ENCODE measurements at regions of chr4 and their contacts with region 1.

Region 1: GRCh38 chr4:184815046-184815877 is 10.5 kb downstream of the ACSL1 start:
- DNase-seq: peak; percentile 76
- H3K4me3 ChIP-seq: peak overlapping the region; percentile 49
- H3K27ac ChIP-seq: peak overlapping the region; percentile 84
- H3K4me1 ChIP-seq: peaks cover 68% of the 10 kb centered on the region
- CTCF ChIP-seq: no peak

Region 2: GRCh38 chr4:184649026-184649970 is 166.0 kb before region 1 on chr4 and contains the starts of genes CASP3 and PRIMPOL:
- CTCF ChIA-PET with region 1: no interaction called
- POLR2A ChIA-PET with region 1: interaction called, 3 read pairs
- intact Hi-C with region 1: loop called (anchors 2 kb)
- DNase-seq: peak; percentile 96
- H3K4me3 ChIP-seq: peak within 1 kb of the TSS; percentile 93
- H3K27ac ChIP-seq: peak within 1 kb of the TSS; percentile 79
- H3K4me1 ChIP-seq: peaks cover 42% of the 10 kb centered on the region
- CTCF ChIP-seq: 0 out of 2 replicates have a peak, but pooled peaks have one; percentile 21
- total RNA-seq, gene CASP3: 25.8 and 29.5 TPM in 2 replicates
- total RNA-seq, gene PRIMPOL: 8.8 and 9.2 TPM in 2 replicates

Region 3: DNA sequence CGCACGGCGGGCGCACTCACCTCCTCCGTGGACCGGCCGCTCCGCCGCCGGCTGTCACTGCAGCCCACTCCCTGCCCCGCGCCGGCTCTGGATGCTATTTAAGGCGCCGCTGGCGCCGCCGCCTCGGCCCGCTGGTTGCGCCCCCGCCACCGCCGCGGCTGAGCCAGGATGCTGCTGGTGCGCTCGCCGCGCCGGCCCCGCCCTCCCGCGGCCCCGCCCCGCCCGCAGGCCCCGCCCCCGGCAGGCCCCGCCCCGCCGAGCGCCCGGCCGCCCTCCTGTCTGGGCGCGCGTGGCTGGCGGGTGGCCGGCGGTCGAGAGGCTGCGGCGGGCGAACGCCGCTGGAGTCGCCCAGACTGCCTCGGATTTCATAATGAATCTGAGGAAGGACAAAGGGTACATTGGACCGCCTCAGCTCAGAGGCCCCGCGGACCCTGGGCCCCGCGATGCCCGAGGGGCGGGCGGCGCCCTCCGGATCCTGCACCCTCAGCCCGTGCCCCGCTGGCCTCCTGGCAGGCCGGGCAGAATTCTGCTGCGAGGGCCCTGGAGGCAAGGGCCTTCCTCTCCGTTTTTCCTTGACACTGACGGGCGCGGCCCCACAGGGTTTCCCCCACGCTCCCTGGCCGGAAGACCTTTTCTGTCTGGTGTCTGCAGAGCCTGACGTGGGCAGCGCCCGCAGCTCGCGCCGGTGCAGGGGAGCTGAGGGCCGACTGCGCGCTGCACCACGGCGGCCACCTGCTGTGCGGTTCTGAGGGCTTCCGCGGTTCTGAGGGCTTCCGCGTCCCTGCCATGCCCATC is 10.8 kb after region 1 on chr4 and contains the start of gene ACSL1:
- CTCF ChIA-PET with region 1: no interaction called
- POLR2A ChIA-PET with region 1: interaction called, 9 read pairs
- intact Hi-C with region 1: loop called (anchors 1 kb)
- DNase-seq: peak; percentile 85
- H3K4me3 ChIP-seq: peak within 1 kb of the TSS; percentile 96
- H3K27ac ChIP-seq: peak within 1 kb of the TSS; percentile 22
- H3K4me1 ChIP-seq: peaks cover 39% of the 10 kb centered on the region
- CTCF ChIP-seq: no peak
- total RNA-seq, gene ACSL1: 20.8 and 24.3 TPM in 2 replicates

Region 4: DNA sequence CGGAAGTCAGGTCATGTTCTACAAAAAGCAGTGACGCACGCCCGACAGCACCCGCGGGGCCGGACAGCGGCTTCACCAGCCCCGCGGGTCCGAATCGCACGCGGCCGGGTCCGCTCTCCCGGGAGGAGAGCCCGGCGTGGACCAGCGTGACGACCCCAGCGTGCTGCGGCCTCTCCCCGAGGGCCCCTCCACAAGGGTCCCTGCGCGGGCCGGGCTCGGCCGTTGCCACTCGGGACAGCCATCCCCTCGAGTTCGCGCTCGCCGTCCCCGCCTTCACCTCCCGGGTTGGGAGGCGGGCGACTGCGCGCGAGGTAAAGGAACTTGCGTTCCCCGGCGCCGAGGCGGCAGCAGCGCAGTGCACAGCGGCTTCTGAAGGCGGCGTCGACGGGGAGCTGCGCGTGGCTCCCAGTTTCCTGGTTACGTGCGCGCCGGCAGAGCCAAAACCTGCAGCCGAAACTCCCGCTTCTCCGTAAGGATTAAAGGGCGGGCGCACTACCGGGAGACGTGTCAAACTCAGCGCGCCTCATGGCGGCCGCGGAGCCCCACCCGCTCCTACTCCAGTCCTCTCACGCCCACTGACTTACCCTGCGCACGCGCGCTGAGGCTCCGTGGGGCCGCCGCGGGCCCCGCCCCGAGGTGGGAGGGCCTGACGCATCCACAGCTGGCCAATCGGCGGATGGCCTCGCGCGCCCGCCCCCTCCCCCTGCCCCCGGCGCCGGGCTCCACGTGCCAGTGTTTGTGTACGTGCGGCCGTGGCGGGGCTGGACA is 580.9 kb after region 1 on chr4:
- CTCF ChIA-PET with region 1: no interaction called
- POLR2A ChIA-PET with region 1: no interaction called
- intact Hi-C with region 1: loop called (anchors 10 kb)
- DNase-seq: peak; percentile 97
- H3K4me3 ChIP-seq: peak overlapping the region; percentile 75
- H3K27ac ChIP-seq: peak overlapping the region; percentile 70
- H3K4me1 ChIP-seq: peaks cover 58% of the 10 kb centered on the region
- CTCF ChIP-seq: no peak